B cell (primary cell): ENCODE measurements at regions of chr17 and their contacts with region 1.

Region 1: GRCh38 chr17:42980398-42981397 is at the start of gene RUNDC1:
- DNase-seq: peak; percentile 97
- ATAC-seq: peak; percentile 82
- H3K4me3 ChIP-seq: peak within 1 kb of the TSS; percentile 83 to 90 (median 88)
- H3K4me3 Mint-ChIP-seq: peak within 1 kb of the TSS; percentile 99
- H3K27ac ChIP-seq: peak within 1 kb of the TSS; percentile 80 to 86
- H3K27ac Mint-ChIP-seq: peak within 1 kb of the TSS; percentile 96
- H3K4me1 ChIP-seq: peaks cover 44 to 56% of the 10 kb centered on the region in 2 donors
- H3K4me1 Mint-ChIP-seq: peaks cover 48% of the 10 kb centered on the region
- H3K27me3 ChIP-seq: no peaks in the 10 kb centered on the region
- H3K27me3 Mint-ChIP-seq: no peaks in the 10 kb centered on the region
- CTCF ChIP-seq: peak; percentile 42
- total RNA-seq, gene RUNDC1: 43.7 and 45.6 TPM in 2 replicates

Region 2: GRCh38 chr17:42609182-42609813 is 371.4 kb before region 1 on chr17 and contains the starts of genes RETREG3 and TUBG1:
- CTCF ChIA-PET with region 1: no interaction called
- POLR2A ChIA-PET with region 1: no interaction called
- intact Hi-C with region 1: loop called (anchors 1 kb)
- DNase-seq: peak; percentile 100
- ATAC-seq: peak; percentile 91
- H3K4me3 ChIP-seq: peak within 1 kb of the TSS; percentile 73 to 95 (median 85)
- H3K4me3 Mint-ChIP-seq: peak within 1 kb of the TSS; percentile 100
- H3K27ac ChIP-seq: peak within 1 kb of the TSS; percentile 79 to 95
- H3K27ac Mint-ChIP-seq: peak within 1 kb of the TSS; percentile 98
- H3K4me1 ChIP-seq: peaks cover 38 to 42% of the 10 kb centered on the region in 2 donors
- H3K4me1 Mint-ChIP-seq: peaks cover 51% of the 10 kb centered on the region
- H3K27me3 ChIP-seq: no peaks in the 10 kb centered on the region
- H3K27me3 Mint-ChIP-seq: no peaks in the 10 kb centered on the region
- CTCF ChIP-seq: peak; percentile 37
- total RNA-seq, gene RETREG3: 103 and 108 TPM in 2 replicates
- total RNA-seq, gene TUBG1: 15.7 and 17.2 TPM in 2 replicates

Region 3: GRCh38 chr17:42809250-42809649 is 171.4 kb before region 1 on chr17:
- CTCF ChIA-PET with region 1: no interaction called
- POLR2A ChIA-PET with region 1: no interaction called
- intact Hi-C with region 1: no loop called
- DNase-seq: no peak
- ATAC-seq: no peak
- H3K4me3 ChIP-seq: no peak overlapping the region
- H3K4me3 Mint-ChIP-seq: no peak overlapping the region
- H3K27ac ChIP-seq: no peak overlapping the region
- H3K27ac Mint-ChIP-seq: no peak overlapping the region
- H3K4me1 ChIP-seq: no peaks in the 10 kb centered on the region
- H3K4me1 Mint-ChIP-seq: no peaks in the 10 kb centered on the region
- H3K27me3 ChIP-seq: no peaks in the 10 kb centered on the region
- H3K27me3 Mint-ChIP-seq: no peaks in the 10 kb centered on the region
- CTCF ChIP-seq: no peak

Region 4: DNA sequence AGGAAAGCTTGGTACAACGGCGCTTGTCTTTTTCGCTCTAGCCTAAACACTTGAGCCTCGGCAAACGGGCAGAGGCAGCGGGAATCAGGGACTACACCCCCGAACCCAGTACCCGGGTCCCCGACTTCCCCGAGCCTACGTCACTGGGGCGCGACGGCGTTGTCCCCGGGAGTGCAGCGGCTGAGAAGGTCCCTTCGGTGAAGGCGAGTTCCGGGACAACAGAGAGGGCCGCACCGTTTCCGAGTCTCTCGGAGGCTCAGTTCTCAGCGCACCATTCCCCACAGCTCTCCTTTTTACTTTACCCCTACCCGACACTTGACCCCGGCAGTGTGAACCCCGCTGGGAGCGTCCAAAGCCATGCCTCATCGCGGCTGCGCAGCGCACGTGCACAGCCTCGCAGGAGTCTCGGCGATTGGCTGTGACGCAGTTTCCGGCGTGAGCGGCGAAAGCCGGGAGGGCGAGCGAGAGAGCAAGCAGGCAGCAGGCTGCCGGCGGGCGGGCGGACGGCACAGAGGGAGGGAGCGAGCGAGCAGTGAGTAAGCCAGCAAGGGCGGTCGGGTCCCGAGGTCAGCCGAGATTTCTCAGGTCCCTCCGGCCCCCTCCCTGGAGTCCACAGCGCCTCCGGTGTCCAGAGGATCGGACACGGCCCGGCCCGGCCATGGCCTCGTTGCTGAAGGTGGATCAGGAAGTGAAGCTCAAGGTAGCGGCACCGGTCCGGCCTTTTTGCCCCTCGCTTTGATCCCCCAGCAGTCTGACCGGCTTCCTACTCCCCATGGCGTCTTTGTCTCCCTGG is 147.5 kb before region 1 on chr17 and contains the start of gene PSME3:
- CTCF ChIA-PET with region 1: no interaction called
- POLR2A ChIA-PET with region 1: interaction called, 5 read pairs
- intact Hi-C with region 1: loop called (anchors 1 kb)
- DNase-seq: peak; percentile 95
- ATAC-seq: peak; percentile 93
- H3K4me3 ChIP-seq: peak within 1 kb of the TSS; percentile 88 to 99 (median 92)
- H3K4me3 Mint-ChIP-seq: peak within 1 kb of the TSS; percentile 98
- H3K27ac ChIP-seq: peak within 1 kb of the TSS; percentile 84 to 94
- H3K27ac Mint-ChIP-seq: peak within 1 kb of the TSS; percentile 98
- H3K4me1 ChIP-seq: peaks cover 12 to 20% of the 10 kb centered on the region in 2 donors
- H3K4me1 Mint-ChIP-seq: peaks cover 24% of the 10 kb centered on the region
- H3K27me3 ChIP-seq: no peaks in the 10 kb centered on the region
- H3K27me3 Mint-ChIP-seq: no peaks in the 10 kb centered on the region
- CTCF ChIP-seq: no peak
- total RNA-seq, gene PSME3: 70.3 and 76.2 TPM in 2 replicates

Region 5: GRCh38 chr17:42964161-42964932 is 16.4 kb before region 1 on chr17 and contains the start of gene AARSD1:
- CTCF ChIA-PET with region 1: interaction called, 6 read pairs
- POLR2A ChIA-PET with region 1: interaction called, 6 read pairs
- intact Hi-C with region 1: loop called (anchors 1 kb)
- DNase-seq: peak; percentile 95
- ATAC-seq: peak; percentile 97
- H3K4me3 ChIP-seq: peak within 1 kb of the TSS; percentile 56 to 97 (median 83)
- H3K4me3 Mint-ChIP-seq: peak within 1 kb of the TSS; percentile 89
- H3K27ac ChIP-seq: peak within 1 kb of the TSS; percentile 63 to 88
- H3K27ac Mint-ChIP-seq: peak within 1 kb of the TSS; percentile 90
- H3K4me1 ChIP-seq: peaks cover 8 to 14% of the 10 kb centered on the region in 2 donors
- H3K4me1 Mint-ChIP-seq: peaks cover 17% of the 10 kb centered on the region
- H3K27me3 ChIP-seq: no peaks in the 10 kb centered on the region
- H3K27me3 Mint-ChIP-seq: no peaks in the 10 kb centered on the region
- CTCF ChIP-seq: no peak
- total RNA-seq, gene AARSD1: 56.5 and 67.4 TPM in 2 replicates